ACHN (cell line): ENCODE measurements at regions of chr5 and their contacts with region 1.

Region 1: GRCh38 chr5:14286574-14287421 is 143.7 kb downstream of the TRIO start:
- DNase-seq: no peak

Region 2: DNA sequence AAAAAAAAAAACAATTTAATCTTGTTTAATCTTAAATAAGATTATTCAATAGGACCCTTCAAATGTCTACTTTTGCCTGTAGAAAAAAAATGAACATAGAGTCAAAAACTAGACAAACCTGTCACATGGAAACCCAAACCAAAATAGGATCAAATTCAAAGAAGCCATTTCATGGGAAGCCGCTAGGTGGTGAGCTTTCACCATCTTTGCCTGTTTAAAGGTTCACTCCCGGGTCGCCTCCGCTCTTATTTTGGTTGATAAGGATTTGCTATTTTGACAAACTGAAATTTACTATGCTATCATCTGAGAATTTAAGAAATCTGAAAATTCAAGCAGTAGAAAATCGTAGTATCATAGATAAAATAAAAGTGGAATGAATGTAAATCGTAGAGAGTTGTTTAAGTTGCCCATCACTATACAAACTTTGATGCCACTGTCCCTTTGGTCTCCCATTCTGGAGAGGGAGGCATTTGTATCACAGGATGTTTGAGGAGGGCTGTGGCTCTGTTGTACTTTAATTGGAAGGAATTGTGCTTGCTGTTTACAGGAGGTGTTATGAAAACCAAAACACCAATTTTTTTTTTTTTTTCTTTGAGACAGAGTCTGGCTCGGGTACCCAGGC is 298.8 kb before region 1 on chr5:
- in situ Hi-C with region 1: loop called (anchors 25 kb)
- DNase-seq: peak; percentile 64